Caco-2 (cell line): ENCODE measurements at regions of chr6 and their contacts with region 1.

Region 1: GRCh38 chr6:134174672-134175198 is 122.3 kb upstream of the SLC2A12 start:
- DNase-seq: peak; percentile 90 to 94
- H3K4me3 ChIP-seq: peak overlapping the region; percentile 56
- H3K4me3 Mint-ChIP-seq: peak overlapping the region; percentile 86
- H3K27ac Mint-ChIP-seq: peak overlapping the region; percentile 84
- H3K4me1 ChIP-seq: peaks cover 11% of the 10 kb centered on the region
- H3K4me1 Mint-ChIP-seq: no peaks in the 10 kb centered on the region
- H3K27me3 ChIP-seq: no peaks in the 10 kb centered on the region
- H3K27me3 Mint-ChIP-seq: no peaks in the 10 kb centered on the region
- CTCF ChIP-seq: no peak

Region 2: DNA sequence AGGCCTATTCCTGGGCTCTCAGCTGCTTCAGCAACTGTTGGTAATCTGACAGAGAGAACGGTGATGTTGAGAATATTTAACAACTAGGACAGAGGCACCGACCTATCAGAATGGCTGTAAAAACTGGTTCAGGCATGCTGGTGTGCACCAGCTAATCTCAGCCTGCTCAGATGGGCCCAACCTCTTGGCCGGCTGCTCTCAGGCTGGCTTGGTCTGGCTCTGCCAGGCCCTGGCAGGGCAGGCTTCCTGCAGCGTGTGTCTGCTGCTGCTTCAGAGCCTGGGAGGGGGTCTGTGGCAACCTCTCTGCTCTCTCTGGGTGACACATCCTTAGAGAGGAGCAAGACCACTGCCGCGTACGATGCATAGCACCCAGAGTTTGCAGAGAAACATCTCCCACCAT is 127.1 kb before region 1 on chr6:
- CTCF ChIA-PET with region 1: no interaction called
- POLR2A ChIA-PET with region 1: no interaction called
- intact Hi-C with region 1: no loop called
- DNase-seq: no peak
- H3K4me3 ChIP-seq: no peak overlapping the region
- H3K4me3 Mint-ChIP-seq: no peak overlapping the region
- H3K27ac Mint-ChIP-seq: no peak overlapping the region
- H3K4me1 ChIP-seq: no peaks in the 10 kb centered on the region
- H3K4me1 Mint-ChIP-seq: peaks cover 4% of the 10 kb centered on the region
- H3K27me3 ChIP-seq: no peaks in the 10 kb centered on the region
- H3K27me3 Mint-ChIP-seq: peaks cover 4% of the 10 kb centered on the region
- CTCF ChIP-seq: no peak

Region 3: GRCh38 chr6:134063966-134064445 is 110.7 kb before region 1 on chr6:
- CTCF ChIA-PET with region 1: no interaction called
- POLR2A ChIA-PET with region 1: no interaction called
- intact Hi-C with region 1: no loop called
- DNase-seq: peak; percentile 70 to 77
- H3K4me3 ChIP-seq: no peak overlapping the region
- H3K4me3 Mint-ChIP-seq: no peak overlapping the region
- H3K27ac Mint-ChIP-seq: no peak overlapping the region
- H3K4me1 ChIP-seq: peaks cover 10% of the 10 kb centered on the region
- H3K4me1 Mint-ChIP-seq: peaks cover 11% of the 10 kb centered on the region
- H3K27me3 ChIP-seq: no peaks in the 10 kb centered on the region
- H3K27me3 Mint-ChIP-seq: no peaks in the 10 kb centered on the region
- CTCF ChIP-seq: peak; percentile 83 to 94

Region 4: GRCh38 chr6:134247231-134247833 is 72.6 kb after region 1 on chr6:
- CTCF ChIA-PET with region 1: no interaction called
- POLR2A ChIA-PET with region 1: no interaction called
- intact Hi-C with region 1: loop called (anchors 1 kb)
- DNase-seq: no peak
- H3K4me3 ChIP-seq: no peak overlapping the region
- H3K4me3 Mint-ChIP-seq: no peak overlapping the region
- H3K27ac Mint-ChIP-seq: no peak overlapping the region
- H3K4me1 ChIP-seq: peaks cover 20% of the 10 kb centered on the region
- H3K4me1 Mint-ChIP-seq: peaks cover 18% of the 10 kb centered on the region
- H3K27me3 ChIP-seq: no peaks in the 10 kb centered on the region
- H3K27me3 Mint-ChIP-seq: no peaks in the 10 kb centered on the region
- CTCF ChIP-seq: no peak

Region 5: DNA sequence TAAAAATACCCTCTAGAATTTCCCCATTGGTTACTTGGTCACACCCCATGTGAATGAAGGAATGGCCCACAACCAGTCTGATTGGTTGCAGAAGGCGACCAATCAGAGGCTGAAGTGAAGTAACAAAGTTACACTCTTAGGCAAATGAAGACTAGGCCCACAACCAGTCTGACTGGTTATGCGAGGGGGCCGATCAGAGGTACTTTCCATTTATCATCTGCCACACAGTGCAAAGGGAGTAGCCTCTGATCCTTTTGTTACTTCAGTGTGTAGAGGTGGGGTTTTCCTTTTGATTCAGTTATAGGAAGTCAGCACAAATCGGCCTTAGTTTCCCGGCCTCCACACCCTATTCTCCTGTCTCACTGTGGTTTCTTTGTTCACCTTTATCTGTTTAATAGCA is 204.4 kb after region 1 on chr6:
- CTCF ChIA-PET with region 1: no interaction called
- POLR2A ChIA-PET with region 1: no interaction called
- intact Hi-C with region 1: loop called (anchors 1 kb)
- DNase-seq: peak; percentile 89 to 90
- H3K4me3 ChIP-seq: no peak overlapping the region
- H3K4me3 Mint-ChIP-seq: peak overlapping the region; percentile 58
- H3K27ac Mint-ChIP-seq: peak overlapping the region; percentile 40
- H3K4me1 ChIP-seq: peaks cover 17% of the 10 kb centered on the region
- H3K4me1 Mint-ChIP-seq: peaks cover 21% of the 10 kb centered on the region
- H3K27me3 ChIP-seq: no peaks in the 10 kb centered on the region
- H3K27me3 Mint-ChIP-seq: no peaks in the 10 kb centered on the region
- CTCF ChIP-seq: no peak

Region 6: DNA sequence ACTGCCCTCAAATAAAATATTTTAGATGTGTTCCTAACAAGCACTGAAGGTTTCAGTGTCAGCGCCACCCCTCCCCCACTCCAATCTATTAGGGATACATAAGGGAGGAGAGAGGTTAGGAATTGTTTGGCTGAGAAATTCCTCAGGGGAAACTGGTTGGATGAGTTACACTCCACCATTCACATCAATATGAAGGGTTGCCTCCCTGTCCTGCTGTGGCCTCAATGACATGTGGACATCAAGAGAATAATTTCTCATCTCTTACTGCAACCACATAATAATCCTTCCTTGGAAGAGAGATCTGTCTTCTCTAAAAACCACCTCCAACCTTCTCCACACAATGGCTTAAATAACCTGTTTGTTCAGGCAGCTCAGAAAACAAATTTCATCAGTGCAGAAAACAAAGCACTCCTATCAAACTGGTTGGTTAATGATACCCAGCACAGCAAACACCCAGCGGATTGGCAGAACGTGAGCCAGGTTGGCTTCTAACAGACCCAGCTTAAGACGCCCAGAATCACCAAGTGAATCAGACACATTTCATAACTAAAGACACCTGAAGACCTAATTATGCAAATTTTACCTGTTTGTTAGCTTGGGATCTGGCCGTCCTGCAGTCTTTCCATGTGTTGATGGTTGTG is 279.3 kb after region 1 on chr6:
- CTCF ChIA-PET with region 1: no interaction called
- POLR2A ChIA-PET with region 1: no interaction called
- intact Hi-C with region 1: loop called (anchors 1 kb)
- DNase-seq: peak; percentile 63 to 67
- H3K4me3 ChIP-seq: no peak overlapping the region
- H3K4me3 Mint-ChIP-seq: peak overlapping the region; percentile 42
- H3K27ac Mint-ChIP-seq: peak overlapping the region; percentile 15
- H3K4me1 ChIP-seq: peaks cover 24% of the 10 kb centered on the region
- H3K4me1 Mint-ChIP-seq: peaks cover 18% of the 10 kb centered on the region
- H3K27me3 ChIP-seq: no peaks in the 10 kb centered on the region
- H3K27me3 Mint-ChIP-seq: no peaks in the 10 kb centered on the region
- CTCF ChIP-seq: no peak

Region 7: GRCh38 chr6:134640975-134641429 is 466.3 kb after region 1 on chr6:
- CTCF ChIA-PET with region 1: interaction called, 5 read pairs
- POLR2A ChIA-PET with region 1: no interaction called
- intact Hi-C with region 1: loop called (anchors 1 kb)
- DNase-seq: peak; percentile 71 to 78
- H3K4me3 ChIP-seq: no peak overlapping the region
- H3K4me3 Mint-ChIP-seq: no peak overlapping the region
- H3K27ac Mint-ChIP-seq: peak overlapping the region; percentile 56
- H3K4me1 ChIP-seq: peaks cover 37% of the 10 kb centered on the region
- H3K4me1 Mint-ChIP-seq: peaks cover 34% of the 10 kb centered on the region
- H3K27me3 ChIP-seq: no peaks in the 10 kb centered on the region
- H3K27me3 Mint-ChIP-seq: no peaks in the 10 kb centered on the region
- CTCF ChIP-seq: peak; percentile 76 to 82

Region 8: GRCh38 chr6:134882426-134883038 is 707.8 kb after region 1 on chr6:
- CTCF ChIA-PET with region 1: interaction called, 5 read pairs
- POLR2A ChIA-PET with region 1: no interaction called
- intact Hi-C with region 1: loop called (anchors 1 kb)
- DNase-seq: peak; percentile 45 to 65
- H3K4me3 ChIP-seq: no peak overlapping the region
- H3K4me3 Mint-ChIP-seq: no peak overlapping the region
- H3K27ac Mint-ChIP-seq: no peak overlapping the region
- H3K4me1 ChIP-seq: no peaks in the 10 kb centered on the region; the same call in 1 of the 2 replicates
- H3K4me1 Mint-ChIP-seq: no peaks in the 10 kb centered on the region
- H3K27me3 ChIP-seq: no peaks in the 10 kb centered on the region
- H3K27me3 Mint-ChIP-seq: no peaks in the 10 kb centered on the region
- CTCF ChIP-seq: peak; percentile 87 to 91